ENCODE measurements at regions of chr6 and their contacts with region 1.

Region 1: DNA sequence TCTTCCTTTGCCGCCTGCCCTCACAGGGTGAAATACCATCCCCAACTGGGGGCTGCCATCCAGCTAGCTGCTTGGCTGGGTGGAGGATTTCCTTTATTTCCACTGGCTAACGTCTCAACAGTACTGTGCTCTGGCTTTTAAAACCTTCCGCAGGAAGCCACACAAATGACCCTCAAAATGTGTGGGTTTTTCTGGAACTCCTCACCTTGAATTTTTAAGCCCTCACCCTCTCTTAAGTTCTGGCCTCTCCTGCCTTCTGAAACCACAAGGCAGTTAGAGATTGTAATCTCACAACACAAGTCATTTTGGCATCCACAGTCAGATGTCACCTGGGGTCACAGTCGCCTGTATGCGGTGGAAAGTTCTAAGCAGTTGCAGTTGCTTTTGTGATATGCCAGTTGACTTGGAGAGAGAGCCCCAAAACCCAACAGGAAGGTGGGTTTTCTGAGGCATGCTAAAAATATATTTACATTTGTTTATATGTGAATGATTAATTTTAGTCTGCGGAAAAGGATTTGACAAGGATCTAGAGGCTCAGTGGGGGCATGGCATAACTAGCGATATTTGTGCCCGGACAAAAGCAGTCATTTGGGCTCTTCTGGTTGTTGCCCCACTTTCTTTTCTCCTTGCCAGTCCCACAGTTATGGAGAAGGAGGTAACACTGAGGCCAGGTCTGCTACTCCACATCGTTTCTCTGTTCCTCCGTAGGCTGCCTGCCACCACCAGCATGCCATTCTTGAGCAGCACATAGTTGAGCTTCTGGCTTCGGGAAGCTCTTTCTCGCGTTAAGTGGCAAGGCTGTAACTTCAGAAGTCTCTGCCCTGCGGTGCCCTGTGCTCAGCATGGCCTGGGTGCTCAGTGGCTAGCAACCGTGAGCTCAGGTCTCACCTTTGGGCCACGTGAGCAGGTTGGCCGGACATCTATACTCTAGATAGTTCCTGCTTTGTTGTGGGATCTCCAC is 335.3 kb downstream of the CD83 start:
- DNase-seq: peak; percentile 90
- H3K4me3 Mint-ChIP-seq: peak overlapping the region; percentile 65
- H3K27ac Mint-ChIP-seq: peak overlapping the region; percentile 95
- H3K4me1 Mint-ChIP-seq: peaks cover 81% of the 10 kb centered on the region
- H3K27me3 Mint-ChIP-seq: no peaks in the 10 kb centered on the region

Region 2: DNA sequence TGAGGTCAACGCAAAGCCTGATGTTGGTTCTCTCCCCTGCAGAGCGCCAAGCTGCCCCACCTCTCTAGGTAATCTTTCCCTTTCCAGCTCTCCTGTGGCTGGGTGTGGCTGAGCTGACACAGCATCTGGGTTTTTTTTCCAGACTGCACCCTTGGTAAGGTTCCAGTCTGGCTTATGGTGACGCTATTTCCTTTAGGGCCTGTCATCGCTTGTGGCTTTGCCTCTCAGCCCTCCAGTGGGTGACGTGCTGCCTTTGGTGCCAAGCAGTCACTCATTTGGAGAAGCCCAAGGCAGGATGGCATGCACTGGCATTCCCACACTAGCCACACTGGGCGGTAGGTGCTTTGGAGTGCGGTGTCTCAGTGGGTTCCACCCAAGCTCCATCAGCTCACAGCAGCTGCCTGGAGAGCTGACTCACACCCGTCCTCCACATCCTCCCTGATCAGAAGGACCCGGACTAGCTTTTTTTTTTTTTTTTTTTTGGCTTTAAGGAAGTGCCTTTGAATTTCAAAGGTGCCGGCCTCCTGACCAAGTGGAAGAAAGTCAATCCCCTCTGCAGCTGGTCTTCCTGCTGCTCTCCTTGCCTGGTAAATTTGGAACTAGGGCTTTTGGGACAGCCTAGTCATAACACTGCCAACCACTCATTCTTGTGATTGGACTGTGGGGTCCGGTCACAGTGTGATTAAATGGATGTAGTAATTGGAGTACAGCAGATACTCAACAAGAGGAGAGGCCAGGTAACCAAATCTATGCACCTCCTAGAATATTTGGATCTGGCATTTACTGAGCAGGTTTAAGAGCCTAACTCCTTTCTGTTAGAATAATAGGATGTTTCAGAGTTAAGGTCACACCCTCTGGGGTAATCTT is 181.7 kb before region 1 on chr6:
- intact Hi-C with region 1: loop called (anchors 2 kb)
- DNase-seq: peak; percentile 90
- H3K4me3 Mint-ChIP-seq: peak overlapping the region; percentile 30
- H3K27ac Mint-ChIP-seq: peak overlapping the region; percentile 80
- H3K4me1 Mint-ChIP-seq: peaks cover 44% of the 10 kb centered on the region
- H3K27me3 Mint-ChIP-seq: no peaks in the 10 kb centered on the region

Region 3: GRCh38 chr6:14354919-14355572 is 97.8 kb before region 1 on chr6:
- intact Hi-C with region 1: no loop called
- DNase-seq: no peak
- H3K4me3 Mint-ChIP-seq: no peak overlapping the region
- H3K27ac Mint-ChIP-seq: no peak overlapping the region
- H3K4me1 Mint-ChIP-seq: peaks cover 12% of the 10 kb centered on the region
- H3K27me3 Mint-ChIP-seq: no peaks in the 10 kb centered on the region

Region 4: DNA sequence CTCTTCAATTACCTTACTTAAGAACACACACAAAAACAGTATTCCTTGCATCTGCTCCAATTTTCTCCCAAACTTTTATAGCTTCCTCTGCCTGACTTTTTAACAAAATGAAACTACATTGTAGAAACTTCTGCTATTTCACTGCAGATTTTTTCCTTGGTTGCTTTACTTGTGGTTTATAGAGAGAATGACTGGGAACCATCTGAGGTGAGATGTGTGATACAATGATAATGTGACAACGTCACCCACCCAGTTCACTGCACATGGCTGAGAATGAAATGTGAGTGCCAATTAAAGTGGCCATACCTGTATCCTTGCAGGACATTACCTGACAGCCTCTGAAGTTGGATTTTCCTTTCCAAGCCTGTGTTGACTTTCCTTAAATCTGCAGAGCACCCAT is 76.9 kb before region 1 on chr6:
- intact Hi-C with region 1: loop called (anchors 5 kb)
- DNase-seq: no peak
- H3K4me3 Mint-ChIP-seq: no peak overlapping the region
- H3K27ac Mint-ChIP-seq: no peak overlapping the region
- H3K4me1 Mint-ChIP-seq: peaks cover 28% of the 10 kb centered on the region
- H3K27me3 Mint-ChIP-seq: peaks cover 3% of the 10 kb centered on the region

Region 5: GRCh38 chr6:14542670-14543366 is 90.0 kb after region 1 on chr6:
- intact Hi-C with region 1: loop called (anchors 1 kb)
- DNase-seq: peak; percentile 74
- H3K4me3 Mint-ChIP-seq: peak overlapping the region; percentile 17
- H3K27ac Mint-ChIP-seq: peak overlapping the region; percentile 59
- H3K4me1 Mint-ChIP-seq: peaks cover 25% of the 10 kb centered on the region
- H3K27me3 Mint-ChIP-seq: peaks cover 2% of the 10 kb centered on the region

Region 6: DNA sequence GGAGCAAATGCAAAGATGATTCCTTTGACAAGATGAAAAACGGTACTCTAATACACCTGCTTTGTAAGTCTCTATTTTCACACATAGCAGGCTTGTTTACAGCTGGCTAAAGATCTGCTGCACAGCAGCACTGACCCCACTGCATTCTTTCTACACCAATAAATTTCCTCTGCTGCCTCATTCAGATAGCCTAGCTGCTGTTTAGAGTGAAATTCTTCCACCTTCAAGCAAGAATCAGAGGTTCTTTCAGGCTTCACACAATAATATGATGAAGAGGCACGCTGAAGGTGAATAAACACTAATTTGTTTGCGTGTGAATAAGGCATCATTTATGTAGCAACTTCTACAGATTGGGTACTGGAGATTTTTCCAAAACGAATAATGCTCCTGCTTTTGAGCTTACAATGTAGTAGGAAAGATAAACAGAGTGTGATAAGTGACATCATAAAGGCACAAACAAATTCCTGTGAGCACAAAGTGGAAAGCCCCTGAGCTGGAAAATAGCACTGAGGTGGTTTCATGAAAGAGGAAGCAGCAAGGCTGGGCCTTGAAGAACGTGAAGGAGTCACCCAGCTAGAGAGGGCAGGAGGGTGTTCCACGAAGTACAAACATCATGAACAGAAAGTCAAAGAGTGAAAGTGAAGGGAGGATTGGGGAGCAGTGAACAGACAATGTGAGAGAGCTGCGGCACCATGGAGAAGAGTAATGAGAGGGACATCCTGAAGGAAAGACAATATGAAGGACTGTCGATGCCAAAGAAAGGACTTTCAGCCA is 208.1 kb after region 1 on chr6:
- intact Hi-C with region 1: loop called (anchors 1 kb)
- DNase-seq: peak; percentile 91
- H3K4me3 Mint-ChIP-seq: no peak overlapping the region
- H3K27ac Mint-ChIP-seq: no peak overlapping the region
- H3K4me1 Mint-ChIP-seq: peaks cover 46% of the 10 kb centered on the region
- H3K27me3 Mint-ChIP-seq: peaks cover 7% of the 10 kb centered on the region

Region 7: DNA sequence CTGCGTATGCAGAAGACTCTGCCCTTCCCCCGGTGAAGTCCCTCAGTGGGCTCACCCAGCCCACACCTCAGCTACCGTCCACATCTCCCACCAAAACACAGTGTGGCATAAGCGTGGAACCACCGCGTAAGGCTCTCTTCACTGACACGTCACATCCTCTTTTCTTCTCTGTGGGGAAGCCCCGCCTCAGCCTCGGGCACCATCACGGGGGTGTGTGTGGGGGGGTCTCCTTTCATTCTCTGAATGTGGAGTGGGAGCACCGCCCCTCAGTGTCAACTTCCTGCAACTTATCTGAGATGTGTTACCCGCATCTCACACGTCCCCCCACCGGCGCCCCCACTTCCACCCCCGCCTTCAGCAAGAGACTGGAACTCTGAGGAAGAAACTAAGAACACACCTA is 404.7 kb after region 1 on chr6:
- intact Hi-C with region 1: loop called (anchors 5 kb)
- DNase-seq: peak; percentile 82
- H3K4me3 Mint-ChIP-seq: peak overlapping the region; percentile 71
- H3K27ac Mint-ChIP-seq: peak overlapping the region; percentile 98
- H3K4me1 Mint-ChIP-seq: peaks cover 35% of the 10 kb centered on the region
- H3K27me3 Mint-ChIP-seq: no peaks in the 10 kb centered on the region